ENCODE measurements at regions of chr20 and their contacts with region 1.

Region 1: DNA sequence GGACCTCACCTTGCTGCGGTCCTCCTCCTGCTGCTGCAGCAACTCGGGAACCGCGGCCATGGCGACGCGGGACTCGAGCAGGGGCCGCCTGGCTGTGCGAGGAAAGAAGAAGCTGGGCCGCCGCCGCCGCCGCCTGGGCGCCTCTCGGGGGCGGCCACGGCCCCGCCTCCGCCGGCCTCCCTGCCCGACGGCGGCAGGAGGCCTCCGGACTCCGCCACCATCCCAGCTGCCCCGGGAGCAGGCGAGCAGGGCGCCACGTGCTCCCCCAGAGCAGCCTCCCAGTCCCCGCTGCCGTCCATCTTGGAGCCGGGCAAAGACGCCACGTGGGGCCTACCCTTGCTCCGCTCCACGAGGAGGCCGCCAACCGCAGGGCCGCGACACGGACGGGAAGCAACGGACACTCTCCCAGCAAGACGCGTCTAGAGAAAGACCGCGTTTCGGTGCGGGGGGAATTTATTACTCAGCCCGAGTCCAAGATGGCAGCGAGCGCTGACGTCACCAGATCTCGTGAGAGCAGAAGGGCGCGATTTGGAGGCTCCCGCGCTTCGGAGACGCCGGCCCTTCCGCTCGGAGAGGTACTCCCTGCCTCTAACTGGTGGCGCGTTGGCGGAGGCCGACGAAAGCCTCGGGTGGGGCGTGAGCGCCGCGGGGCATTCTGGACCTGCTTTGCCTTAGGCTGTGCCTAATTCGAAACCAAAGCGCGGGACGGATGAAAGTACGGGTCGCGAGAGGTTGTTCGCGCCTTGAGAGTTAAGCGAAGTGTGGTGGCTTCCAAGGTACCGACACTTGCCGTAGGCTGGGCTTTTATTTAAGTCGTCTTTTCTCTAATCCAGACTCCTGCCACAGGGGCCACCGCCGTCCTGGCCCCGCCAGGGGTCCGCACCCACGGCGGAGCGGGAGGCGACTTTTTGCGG is at the starts of genes MGME1 and SNX5:
- DNase-seq: peak; percentile 100
- H3K4me3 Mint-ChIP-seq: peak within 1 kb of the TSS; percentile 99
- H3K27ac Mint-ChIP-seq: peak within 1 kb of the TSS; percentile 98
- H3K4me1 Mint-ChIP-seq: peaks cover 62% of the 10 kb centered on the region
- H3K27me3 Mint-ChIP-seq: no peaks in the 10 kb centered on the region
- total RNA-seq, gene MGME1: 32.1 and 33.6 TPM in 2 replicates
- total RNA-seq, gene SNX5: 238 and 248 TPM in 2 replicates

Region 2: GRCh38 chr20:16573001-16573965 is 1395.3 kb before region 1 on chr20 and contains the start of gene KIF16B:
- intact Hi-C with region 1: loop called (anchors 5 kb)
- DNase-seq: peak; percentile 83
- H3K4me3 Mint-ChIP-seq: peak within 1 kb of the TSS; percentile 90
- H3K27ac Mint-ChIP-seq: peak within 1 kb of the TSS; percentile 91
- H3K4me1 Mint-ChIP-seq: peaks cover 36% of the 10 kb centered on the region
- H3K27me3 Mint-ChIP-seq: no peaks in the 10 kb centered on the region
- total RNA-seq, gene KIF16B: 7.2 and 8.1 TPM in 2 replicates

Region 3: DNA sequence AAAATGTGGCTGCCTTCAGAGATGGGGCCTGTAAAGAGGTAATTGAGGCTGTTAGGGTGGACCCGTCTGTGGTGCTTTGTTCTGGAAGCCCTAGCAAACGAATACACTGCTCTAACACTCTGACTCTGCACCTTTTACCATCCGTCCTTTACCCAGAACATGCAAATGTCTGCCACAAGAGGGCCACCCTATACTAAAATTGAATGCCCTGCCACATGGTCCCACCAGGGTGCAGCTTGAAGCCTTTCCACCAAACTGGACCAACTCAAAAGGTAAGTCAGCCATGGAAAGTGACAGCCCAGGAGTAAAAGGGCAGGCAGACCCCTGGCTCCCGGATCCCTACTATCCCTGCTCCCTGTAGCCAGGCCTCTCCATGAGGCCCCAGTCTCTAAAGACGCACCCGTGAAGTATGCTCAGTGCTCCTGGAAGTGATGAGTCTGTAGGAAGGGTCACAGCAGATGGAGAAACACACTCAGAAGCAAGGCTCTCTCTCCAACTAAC is 431.6 kb before region 1 on chr20:
- intact Hi-C with region 1: loop called (anchors 10 kb)
- DNase-seq: peak; percentile 63
- H3K4me3 Mint-ChIP-seq: no peak overlapping the region
- H3K27ac Mint-ChIP-seq: no peak overlapping the region
- H3K4me1 Mint-ChIP-seq: peaks cover 40% of the 10 kb centered on the region
- H3K27me3 Mint-ChIP-seq: peaks cover 24% of the 10 kb centered on the region

Region 4: GRCh38 chr20:17682103-17682888 is 286.3 kb before region 1 on chr20 and contains the start of gene RRBP1:
- intact Hi-C with region 1: loop called (anchors 1 kb)
- DNase-seq: peak; percentile 97
- H3K4me3 Mint-ChIP-seq: peak within 1 kb of the TSS; percentile 88
- H3K27ac Mint-ChIP-seq: peak within 1 kb of the TSS; percentile 91
- H3K4me1 Mint-ChIP-seq: peaks cover 24% of the 10 kb centered on the region
- H3K27me3 Mint-ChIP-seq: peaks cover 26% of the 10 kb centered on the region
- total RNA-seq, gene RRBP1: 54.8 and 56.0 TPM in 2 replicates

Region 5: DNA sequence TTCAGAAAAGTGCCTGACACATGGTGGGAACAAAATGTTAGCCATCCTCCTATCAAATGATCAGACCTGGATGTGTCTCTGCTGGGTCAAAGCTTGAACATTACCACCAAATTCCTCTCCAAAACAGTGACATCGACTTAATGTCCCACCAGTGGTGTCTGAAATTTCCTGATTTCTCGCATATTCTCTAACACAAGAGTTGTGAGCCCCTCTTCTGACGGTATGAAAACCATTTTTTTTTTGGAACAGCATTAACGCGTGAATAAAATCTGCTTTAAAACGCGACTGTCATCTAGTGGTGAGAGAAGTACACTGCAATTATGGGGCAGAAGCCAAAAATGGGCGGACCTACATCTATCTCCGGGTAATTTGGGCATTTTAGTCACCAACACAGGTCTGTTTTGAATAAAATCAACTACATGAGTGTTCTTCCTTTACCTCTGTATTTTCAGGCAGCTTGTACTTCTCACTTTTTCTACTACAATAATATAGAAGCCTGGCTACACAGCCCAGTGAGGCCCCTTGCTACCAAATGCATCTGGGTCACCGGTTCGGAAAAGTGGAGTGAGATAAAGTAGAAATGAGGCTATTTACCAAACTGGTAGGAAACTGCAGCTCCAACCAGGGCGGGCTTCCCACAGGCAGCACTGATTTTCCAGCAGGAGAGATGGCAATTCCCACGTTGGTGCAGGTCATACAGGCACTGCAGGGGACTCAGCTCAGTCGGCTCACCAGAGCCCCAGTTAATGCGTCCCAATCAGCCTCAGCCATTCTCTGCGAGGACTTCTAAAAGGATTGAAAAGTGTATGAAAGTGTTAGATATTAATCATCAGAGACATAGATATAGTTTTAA is 27.6 kb after region 1 on chr20:
- intact Hi-C with region 1: loop called (anchors 1 kb)
- DNase-seq: peak; percentile 46
- H3K4me3 Mint-ChIP-seq: no peak overlapping the region
- H3K27ac Mint-ChIP-seq: no peak overlapping the region
- H3K4me1 Mint-ChIP-seq: peaks cover 43% of the 10 kb centered on the region
- H3K27me3 Mint-ChIP-seq: peaks cover 3% of the 10 kb centered on the region

Region 6: DNA sequence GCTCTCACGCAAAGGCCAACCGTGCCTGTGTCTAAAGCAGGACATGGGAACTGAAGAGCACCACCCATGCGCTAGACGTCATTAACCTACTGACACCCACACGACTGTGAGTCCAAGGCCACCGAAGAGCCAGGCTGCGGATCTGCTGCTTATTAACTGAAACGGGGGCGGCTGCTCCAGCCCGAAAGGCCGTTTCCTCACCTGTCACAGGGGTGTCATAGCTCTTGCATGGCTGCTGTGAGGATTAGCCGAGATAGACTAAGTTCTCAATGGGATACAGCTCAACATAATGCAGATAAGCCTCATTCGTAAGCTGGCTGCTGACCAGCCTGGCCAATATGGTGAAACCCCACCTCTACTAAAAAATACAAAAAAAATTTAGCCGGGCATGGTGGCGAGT is 62.4 kb after region 1 on chr20:
- intact Hi-C with region 1: no loop called
- DNase-seq: no peak
- H3K4me3 Mint-ChIP-seq: no peak overlapping the region
- H3K27ac Mint-ChIP-seq: no peak overlapping the region
- H3K4me1 Mint-ChIP-seq: no peaks in the 10 kb centered on the region
- H3K27me3 Mint-ChIP-seq: peaks cover 3% of the 10 kb centered on the region

Region 7: DNA sequence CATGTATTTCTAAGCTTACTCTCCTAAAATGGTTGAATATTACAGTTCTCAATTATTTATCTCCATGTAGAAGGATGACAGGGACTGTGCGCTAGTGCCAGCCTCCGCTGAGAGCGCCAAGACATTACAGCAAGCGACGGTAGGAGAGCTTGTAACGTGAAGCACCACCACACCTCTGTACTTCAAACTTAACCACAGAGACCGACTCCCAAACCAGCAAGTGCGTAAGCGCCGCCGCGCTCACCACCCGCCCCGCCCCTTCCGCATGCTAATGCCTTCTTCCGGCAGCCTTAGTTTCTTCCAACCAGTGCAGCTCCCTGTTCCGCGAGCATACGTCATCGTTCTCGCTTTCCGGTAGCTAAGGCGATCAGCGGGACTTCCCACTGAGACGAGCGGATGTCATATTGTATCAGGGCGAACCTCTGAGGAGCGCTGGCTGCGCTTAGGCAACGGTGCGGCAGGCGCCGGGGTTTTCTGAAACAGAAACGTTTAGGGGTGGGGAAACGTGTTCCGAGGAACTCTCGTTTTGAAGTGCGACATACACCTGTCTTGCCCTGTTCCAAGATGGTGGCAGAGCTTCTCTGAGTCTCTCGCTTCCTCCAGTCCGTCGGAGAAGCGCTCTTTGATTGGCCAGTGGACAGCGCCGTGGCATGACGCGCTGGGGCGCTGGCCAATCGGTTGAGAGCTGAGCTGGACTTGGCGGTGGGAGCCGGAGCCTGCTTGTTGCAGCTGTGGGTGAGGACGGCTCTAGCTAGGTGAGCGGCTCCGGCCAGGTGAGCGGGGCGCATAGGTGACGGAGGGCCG is 538.8 kb after region 1 on chr20 and contains the start of gene SEC23B:
- intact Hi-C with region 1: loop called (anchors 2 kb)
- DNase-seq: peak; percentile 97
- H3K4me3 Mint-ChIP-seq: peak within 1 kb of the TSS; percentile 99
- H3K27ac Mint-ChIP-seq: peak within 1 kb of the TSS; percentile 100
- H3K4me1 Mint-ChIP-seq: peaks cover 44% of the 10 kb centered on the region
- H3K27me3 Mint-ChIP-seq: peaks cover 2% of the 10 kb centered on the region
- total RNA-seq, gene SEC23B: 110 and 113 TPM in 2 replicates